GM23248 (cell line): ENCODE measurements at regions of chr3 and their contacts with region 1.

Region 1: DNA sequence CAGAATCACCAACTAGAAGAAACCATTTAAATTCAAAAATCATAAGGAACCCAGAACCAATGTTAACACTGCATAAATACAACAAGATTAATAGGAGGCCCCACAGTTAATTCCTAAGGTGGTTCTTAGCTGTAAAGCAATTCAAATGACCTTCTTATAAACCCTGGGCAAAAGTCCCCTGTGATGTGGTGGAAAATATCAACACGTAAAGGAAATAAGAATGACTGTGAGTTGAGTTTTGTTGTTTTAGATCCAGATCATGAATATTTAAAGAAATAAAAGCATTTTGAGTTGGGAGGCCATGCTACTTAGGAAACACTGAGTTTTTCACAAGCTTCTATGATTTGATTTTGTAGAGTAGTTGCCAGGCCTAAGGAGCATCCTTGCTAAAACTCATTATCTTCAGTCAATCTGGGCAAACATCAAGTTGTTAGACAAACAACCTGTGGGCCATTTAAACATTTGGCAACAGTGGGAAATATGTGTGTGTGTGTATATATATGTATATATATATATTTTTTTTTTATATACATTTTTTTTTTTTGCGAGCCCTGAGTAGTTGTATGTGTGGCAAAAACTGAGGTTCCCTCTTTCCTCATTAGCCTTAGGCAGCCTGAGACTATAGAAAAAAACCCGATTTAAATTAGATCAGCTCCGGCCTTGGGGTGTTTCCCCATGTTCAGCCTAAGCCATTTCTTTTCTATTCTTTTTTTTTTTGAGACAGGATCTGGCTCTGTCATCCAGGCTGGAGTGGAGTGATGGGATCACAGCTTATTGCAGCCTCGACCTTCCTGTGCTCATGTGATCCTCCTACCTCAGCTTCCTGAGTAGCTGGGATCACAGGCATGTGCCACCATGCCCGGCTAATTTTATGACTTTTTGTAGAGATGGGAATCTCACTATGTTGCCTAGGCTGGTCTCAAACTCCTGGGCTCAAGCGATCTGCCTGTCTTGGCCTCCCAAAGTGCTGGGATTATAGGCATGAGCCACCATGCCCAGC is 8.0 kb upstream of the PXK start:
- DNase-seq: no peak
- H3K4me3 ChIP-seq: no peak overlapping the region
- H3K27ac ChIP-seq: no peak overlapping the region
- H3K4me1 ChIP-seq: peaks cover 8% of the 10 kb centered on the region; the same call in 1 of the 2 replicates
- H3K27me3 ChIP-seq: no peaks in the 10 kb centered on the region

Region 2: GRCh38 chr3:57840473-57840872 is 484.2 kb before region 1 on chr3:
- in situ Hi-C with region 1: no loop called
- DNase-seq: no peak
- H3K4me3 ChIP-seq: no peak overlapping the region
- H3K27ac ChIP-seq: no peak overlapping the region
- H3K4me1 ChIP-seq: no peaks in the 10 kb centered on the region
- H3K27me3 ChIP-seq: no peaks in the 10 kb centered on the region

Region 3: DNA sequence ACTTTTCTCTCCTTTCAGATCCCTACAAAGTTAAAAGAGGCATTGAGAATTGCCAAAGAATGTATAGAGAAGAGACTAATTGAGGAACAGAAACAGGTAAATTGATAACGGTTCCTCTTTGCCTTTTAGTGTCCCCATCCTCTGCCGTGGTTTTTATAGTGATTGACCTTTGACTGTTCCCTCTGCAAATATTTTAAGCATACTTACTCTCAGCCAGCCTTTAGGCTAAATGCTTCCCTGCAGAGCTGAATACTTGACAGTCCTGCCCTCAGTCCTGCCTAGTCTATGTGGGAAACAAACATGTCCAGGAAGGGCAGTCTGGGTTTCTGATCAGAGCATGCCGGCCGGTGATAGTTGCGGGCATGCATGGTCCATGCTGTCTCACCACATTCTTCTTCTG is 84.2 kb after region 1 on chr3:
- in situ Hi-C with region 1: loop called (anchors 5 kb)
- DNase-seq: no peak
- H3K4me3 ChIP-seq: no peak overlapping the region
- H3K27ac ChIP-seq: no peak overlapping the region
- H3K4me1 ChIP-seq: peaks cover 10% of the 10 kb centered on the region
- H3K27me3 ChIP-seq: no peaks in the 10 kb centered on the region

Region 4: DNA sequence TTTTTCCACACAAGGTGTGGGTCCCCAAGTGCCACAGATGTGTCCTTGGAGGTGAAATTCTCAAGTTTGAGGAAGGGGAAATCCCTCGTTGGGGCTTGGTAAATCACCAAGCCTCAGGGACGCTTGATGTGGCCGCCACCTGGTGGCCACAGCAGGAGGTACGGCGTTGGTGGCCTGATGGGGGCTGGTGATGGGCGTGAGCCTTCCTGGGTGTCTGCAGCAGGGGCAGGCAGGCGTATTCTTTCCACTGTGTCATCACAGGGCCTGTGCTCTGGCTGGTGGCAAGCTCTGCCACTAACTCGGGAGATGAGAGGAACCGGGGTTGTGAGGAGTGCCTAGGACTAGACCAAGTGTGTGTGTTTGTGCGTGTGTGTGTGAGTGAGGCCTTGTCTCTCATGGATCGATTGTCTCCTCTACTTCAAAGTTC is 208.1 kb after region 1 on chr3:
- in situ Hi-C with region 1: loop called (anchors 10 kb)
- DNase-seq: peak; percentile 85
- H3K4me3 ChIP-seq: no peak overlapping the region
- H3K27ac ChIP-seq: no peak overlapping the region
- H3K4me1 ChIP-seq: peaks cover 26% of the 10 kb centered on the region
- H3K27me3 ChIP-seq: no peaks in the 10 kb centered on the region